Prostate gland (tissue), 2 donors: ENCODE measurements at regions of chr14 and their contacts with region 1.

Region 1: GRCh38 chr14:60091550-60092530 is at the start of gene PCNX4:
- DNase-seq: peak; percentile 98
- H3K4me3 ChIP-seq: peak within 1 kb of the TSS; percentile 55 to 70
- H3K27ac ChIP-seq: peak within 1 kb of the TSS; percentile 98 to 99
- H3K4me1 ChIP-seq: no peaks in the 10 kb centered on the region
- H3K27me3 ChIP-seq: no peaks in the 10 kb centered on the region
- CTCF ChIP-seq: peak in 1 of 4 experiments; percentile 6
- POLR2A ChIP-seq: peak; percentile 94
- total RNA-seq, gene PCNX4: 49.9 to 136 TPM

Region 2: GRCh38 chr14:60164712-60165546 is 73.1 kb after region 1 on chr14 and contains the start of gene DHRS7:
- intact Hi-C with region 1: loop called (anchors 5 kb)
- DNase-seq: peak; percentile 86
- H3K4me3 ChIP-seq: peak within 1 kb of the TSS; percentile 85 to 86
- H3K27ac ChIP-seq: peak within 1 kb of the TSS; percentile 95 to 97
- H3K4me1 ChIP-seq: no peaks in the 10 kb centered on the region
- H3K27me3 ChIP-seq: no peaks in the 10 kb centered on the region
- CTCF ChIP-seq: peak; percentile 45 to 76 (median 66)
- POLR2A ChIP-seq: peak; percentile 65
- total RNA-seq, gene DHRS7: 182 to 2,241 TPM

Region 3: GRCh38 chr14:60248697-60249318 is 157.0 kb after region 1 on chr14 and contains the start of gene PPM1A:
- intact Hi-C with region 1: loop called (anchors 2 kb)
- DNase-seq: peak; percentile 95
- H3K4me3 ChIP-seq: peak within 1 kb of the TSS; percentile 90 to 95
- H3K27ac ChIP-seq: peak within 1 kb of the TSS; percentile 99
- H3K4me1 ChIP-seq: peaks cover 7% of the 10 kb centered on the region
- H3K27me3 ChIP-seq: no peaks in the 10 kb centered on the region
- CTCF ChIP-seq: no peak
- POLR2A ChIP-seq: peak; percentile 87
- total RNA-seq, gene PPM1A: 41.4 to 50.6 TPM

Region 4: GRCh38 chr14:60602291-60602690 is 510.5 kb after region 1 on chr14:
- intact Hi-C with region 1: no loop called
- DNase-seq: no peak
- H3K4me3 ChIP-seq: no peak overlapping the region
- H3K27ac ChIP-seq: no peak overlapping the region
- H3K4me1 ChIP-seq: no peaks in the 10 kb centered on the region
- H3K27me3 ChIP-seq: no peaks in the 10 kb centered on the region
- CTCF ChIP-seq: no peak
- POLR2A ChIP-seq: no peak